AG04449 (cell line): ENCODE measurements at regions of chr10 and their contacts with region 1.

Region 1: DNA sequence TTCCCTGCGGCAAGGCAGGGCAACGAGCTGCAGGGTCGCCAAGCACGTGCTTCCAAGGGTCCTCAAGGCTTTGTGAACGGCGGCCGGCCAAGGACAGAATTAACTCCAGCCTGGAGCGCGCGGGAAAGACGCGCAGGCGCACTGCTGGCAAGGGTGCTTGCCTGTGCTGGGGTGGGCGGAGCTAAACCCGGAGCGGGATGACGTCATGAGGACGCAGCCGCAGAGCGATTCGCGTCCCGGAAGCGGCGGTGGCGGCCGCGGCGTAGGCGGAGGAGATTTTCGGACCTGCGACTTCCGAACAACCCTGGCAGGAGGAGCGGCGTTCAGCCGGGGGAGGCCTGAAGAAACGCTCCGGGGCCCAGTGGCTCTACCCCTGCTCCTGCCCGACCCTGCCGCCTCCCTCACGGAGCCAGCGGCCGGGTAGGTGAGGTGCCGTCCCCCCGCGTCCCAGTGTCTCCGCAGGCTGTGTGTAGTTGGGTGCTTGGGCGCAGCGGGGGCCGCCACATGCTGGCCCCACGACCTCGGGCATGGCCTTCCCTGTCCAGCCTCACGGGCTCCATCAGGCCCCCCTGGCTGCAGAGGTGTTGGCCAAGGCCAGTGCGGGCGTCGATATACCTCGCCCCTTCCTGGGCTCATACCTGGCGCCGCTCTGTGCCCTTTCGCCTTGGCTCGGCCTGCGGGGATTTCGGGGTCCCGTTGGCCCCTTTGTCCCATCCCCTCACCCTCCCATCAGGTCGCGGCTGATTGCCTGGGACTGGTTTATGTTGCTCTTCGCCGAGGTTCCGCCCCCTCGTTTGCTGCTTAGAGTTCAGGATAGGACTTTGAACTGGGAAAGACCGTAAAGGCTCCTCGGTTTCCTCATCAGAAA is at the start of gene ZFYVE27:
- DNase-seq: no peak
- H3K4me3 ChIP-seq: peak within 1 kb of the TSS; percentile 97
- CTCF ChIP-seq: no peak

Region 2: DNA sequence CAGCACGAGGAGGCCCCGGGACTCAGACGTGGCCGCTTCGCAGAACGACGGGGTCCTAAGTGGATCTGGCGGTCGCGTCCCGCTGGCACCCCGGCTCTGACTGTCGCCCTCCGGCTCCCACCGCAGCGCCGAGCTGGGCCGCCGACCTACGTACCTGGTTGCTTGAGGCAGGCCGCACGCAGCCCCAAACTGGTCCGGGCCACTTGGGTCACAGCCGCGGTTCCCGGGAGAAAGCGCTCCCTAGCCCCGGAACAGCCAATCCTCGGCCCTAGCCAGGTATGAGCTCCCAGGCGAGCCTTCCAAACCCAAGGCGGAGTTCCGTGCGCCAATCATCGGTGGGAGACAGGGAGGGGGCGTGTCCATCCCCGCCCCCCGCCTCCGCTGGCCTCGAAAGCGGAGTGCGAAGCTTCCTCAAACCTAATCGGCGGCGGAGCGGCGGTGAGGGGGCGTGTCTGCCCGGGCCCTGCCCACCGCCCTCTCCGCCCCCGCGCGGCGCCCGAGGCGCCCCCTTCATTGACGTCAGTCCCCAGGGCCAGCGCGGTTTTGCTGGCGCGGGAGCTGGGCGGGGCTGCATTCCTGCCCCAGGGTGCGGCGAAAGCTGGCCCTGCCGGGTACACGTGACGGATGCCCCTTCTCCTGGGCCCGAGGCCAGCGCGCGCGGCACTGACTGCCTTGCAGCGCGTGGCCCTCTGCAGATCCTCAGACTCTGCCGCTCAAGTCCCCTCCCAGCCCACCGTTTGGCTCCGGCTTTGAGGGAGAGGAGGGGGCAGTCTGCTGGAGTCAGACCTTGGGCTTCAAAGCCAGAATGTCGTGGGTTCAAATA is 50.0 kb before region 1 on chr10 and contains the start of gene AVPI1:
- CTCF ChIA-PET with region 1: interaction called, 328 read pairs
- POLR2A ChIA-PET with region 1: interaction called, 11 read pairs
- DNase-seq: peak; percentile 82
- H3K4me3 ChIP-seq: peak within 1 kb of the TSS; percentile 82
- CTCF ChIP-seq: no peak

Region 3: DNA sequence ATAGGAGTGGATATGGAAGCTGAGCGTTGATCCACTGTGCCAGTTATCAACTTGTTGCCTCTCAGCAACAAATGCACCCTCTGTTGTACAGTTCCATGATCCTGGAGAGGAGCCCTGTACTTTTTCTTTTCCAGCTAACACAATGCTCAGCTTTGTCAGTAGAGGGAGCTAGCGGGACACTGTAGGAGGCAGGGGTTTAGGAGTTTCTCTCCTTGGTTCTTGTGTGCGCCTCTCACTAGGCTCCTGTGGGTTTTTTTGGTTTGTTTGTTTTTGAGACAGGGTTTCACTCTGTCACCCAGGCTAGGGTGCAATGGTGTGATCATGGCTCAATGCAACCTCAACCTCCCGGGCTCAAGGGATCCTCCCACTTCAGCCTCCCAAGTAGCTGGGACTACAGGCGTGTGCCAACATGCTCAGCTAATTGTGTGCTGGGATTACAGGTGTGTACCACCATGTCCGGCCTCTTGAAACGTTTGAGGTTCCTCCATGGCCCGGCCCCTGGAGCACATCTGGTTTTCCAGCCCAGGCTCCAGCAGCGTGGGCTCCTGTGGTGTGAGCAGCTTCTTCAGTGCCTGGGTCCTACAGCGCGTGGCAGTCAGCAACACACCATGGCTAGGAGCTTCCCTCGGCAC is 35.6 kb before region 1 on chr10:
- CTCF ChIA-PET with region 1: interaction called, 664 read pairs
- POLR2A ChIA-PET with region 1: interaction called, 4 read pairs
- DNase-seq: no peak
- H3K4me3 ChIP-seq: no peak overlapping the region
- CTCF ChIP-seq: peak; percentile 86

Region 4: DNA sequence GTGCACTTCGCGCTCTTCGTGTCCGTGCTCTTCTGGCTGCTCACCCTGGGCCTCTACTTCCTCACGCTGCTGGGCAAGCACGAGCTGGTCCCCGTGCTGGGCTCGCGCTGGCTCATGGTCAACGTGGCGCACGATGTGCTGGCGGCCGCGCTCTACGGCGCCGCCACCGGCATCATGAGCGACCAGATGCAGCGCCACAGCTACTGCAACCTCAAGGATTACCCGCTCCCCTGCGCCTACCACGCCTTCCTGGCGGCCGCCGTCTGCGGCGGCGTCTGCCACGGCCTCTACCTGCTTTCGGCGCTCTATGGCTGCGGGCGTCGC is 23.1 kb before region 1 on chr10:
- CTCF ChIA-PET with region 1: interaction called, 664 read pairs
- POLR2A ChIA-PET with region 1: interaction called, 7 read pairs
- DNase-seq: no peak
- H3K4me3 ChIP-seq: peak overlapping the region; percentile 69
- CTCF ChIP-seq: peak; percentile 33

Region 5: GRCh38 chr10:97724341-97724941 is 12.7 kb before region 1 on chr10:
- CTCF ChIA-PET with region 1: interaction called, 664 read pairs
- POLR2A ChIA-PET with region 1: interaction called, 4 read pairs
- DNase-seq: no peak
- H3K4me3 ChIP-seq: no peak overlapping the region
- CTCF ChIP-seq: no peak

Region 6: DNA sequence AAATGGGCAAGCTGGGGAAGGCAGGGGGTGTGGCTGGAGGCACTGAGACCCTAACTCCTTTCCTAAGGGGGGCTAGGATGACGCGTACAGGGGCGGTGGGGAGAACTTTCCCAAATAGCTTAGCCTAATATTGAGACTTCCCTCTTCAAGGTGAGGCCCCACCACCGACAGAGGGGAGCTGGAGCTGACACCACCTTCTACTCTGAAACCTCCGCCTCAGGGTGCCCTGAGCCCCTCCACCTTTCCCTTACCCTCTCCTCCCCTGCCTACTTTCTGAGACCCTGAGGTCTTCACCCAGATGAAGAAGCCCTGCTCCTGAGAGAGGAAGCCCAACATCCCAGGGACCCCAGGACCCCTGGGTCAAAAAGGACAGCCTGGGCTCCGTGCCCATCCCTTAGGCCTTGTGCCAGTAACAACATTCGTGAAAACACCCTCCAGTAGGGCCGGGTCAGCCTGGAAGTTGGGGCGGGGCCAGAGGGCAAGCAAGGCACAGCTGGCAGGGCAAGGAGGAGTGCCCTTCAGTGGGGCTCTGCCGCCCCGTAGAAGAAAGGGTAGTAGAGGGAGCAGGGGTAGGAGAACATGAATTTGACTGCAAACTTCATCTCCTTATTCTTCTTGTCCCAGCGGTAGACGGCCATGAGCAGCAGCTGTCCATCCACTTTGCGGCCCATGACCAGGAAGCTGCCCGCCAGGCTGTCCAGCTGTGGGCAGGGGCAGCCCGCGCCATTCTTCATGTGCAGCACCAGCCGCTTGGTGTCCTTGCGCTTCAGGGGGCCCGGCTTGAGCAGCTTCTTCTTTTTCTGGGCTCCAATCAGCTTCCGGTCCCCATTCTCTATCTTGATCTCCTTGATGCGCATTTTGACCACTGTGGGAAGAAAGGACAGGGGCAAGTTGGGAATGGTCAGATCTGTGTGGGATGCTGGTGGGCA is 30.1 kb after region 1 on chr10:
- CTCF ChIA-PET with region 1: no interaction called
- POLR2A ChIA-PET with region 1: no interaction called
- DNase-seq: no peak
- H3K4me3 ChIP-seq: no peak overlapping the region
- CTCF ChIP-seq: no peak

Region 7: DNA sequence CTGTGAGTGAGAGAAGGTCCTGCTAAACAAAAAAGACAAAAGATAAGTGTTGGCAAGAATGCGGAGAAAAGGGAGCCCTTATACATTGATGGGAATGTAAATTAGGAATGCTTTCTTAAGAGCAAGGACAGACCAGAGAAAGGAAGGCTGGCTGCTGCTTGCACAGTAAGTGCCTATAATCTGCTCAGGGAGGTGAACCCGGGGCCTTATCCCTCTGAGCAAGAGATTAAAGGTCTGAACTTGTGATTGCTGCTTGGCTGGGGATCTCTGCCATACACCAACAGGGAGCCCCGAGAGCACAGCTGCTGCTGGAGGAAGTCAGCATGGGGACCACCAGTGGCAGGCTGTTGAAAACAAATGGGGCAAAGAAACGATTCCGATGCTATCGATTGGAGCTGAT is 325.3 kb after region 1 on chr10:
- CTCF ChIA-PET with region 1: no interaction called
- POLR2A ChIA-PET with region 1: no interaction called
- DNase-seq: no peak
- H3K4me3 ChIP-seq: no peak overlapping the region
- CTCF ChIP-seq: no peak